Ascending aorta (tissue), 2 donors: ENCODE measurements at regions of chr20 and their contacts with region 1.

Region 1: DNA sequence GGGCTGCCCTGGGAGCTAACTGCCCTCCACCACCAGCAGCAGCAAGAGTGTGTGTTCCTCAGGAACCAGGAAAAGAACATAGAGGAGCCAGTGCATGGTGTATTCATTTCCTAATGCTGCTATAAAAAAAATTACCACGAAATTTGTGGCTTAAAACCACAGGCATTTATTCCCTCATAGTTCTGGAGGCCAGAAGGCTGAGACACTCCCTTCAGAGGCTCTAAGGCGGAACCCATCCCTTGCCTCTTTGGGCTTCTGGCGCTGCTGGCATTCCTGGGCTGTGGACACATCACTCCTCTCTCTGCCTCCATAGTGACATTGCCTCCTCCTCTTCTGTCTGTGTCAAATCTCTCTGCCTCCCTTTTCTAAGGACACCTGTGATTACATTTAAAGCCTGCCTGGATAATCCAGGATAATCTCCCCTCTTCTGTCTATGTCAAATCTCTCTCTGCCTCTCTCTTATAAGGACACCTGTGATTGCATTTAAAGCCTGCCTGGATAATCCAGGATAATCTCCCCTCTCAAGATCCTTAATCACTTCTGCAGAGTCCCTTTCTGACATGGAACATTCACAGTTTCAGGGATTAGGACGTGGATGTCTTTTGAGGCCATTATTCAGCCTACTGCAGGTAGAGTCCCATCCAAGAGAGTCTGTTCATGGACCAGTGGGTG is 54.7 kb downstream of the NDUFAF5 start:
- DNase-seq: no peak
- H3K4me3 ChIP-seq: no peak overlapping the region
- H3K27ac ChIP-seq: no peak overlapping the region
- H3K4me1 ChIP-seq: no peaks in the 10 kb centered on the region
- H3K27me3 ChIP-seq: no peaks in the 10 kb centered on the region
- CTCF ChIP-seq: no peak

Region 2: GRCh38 chr20:13029687-13030510 is 809.7 kb before region 1 on chr20:
- intact Hi-C with region 1: no loop called
- DNase-seq: peak in 1 of 2 donors; percentile 70
- H3K4me3 ChIP-seq: no peak overlapping the region
- H3K27ac ChIP-seq: no peak overlapping the region
- H3K4me1 ChIP-seq: no peaks in the 10 kb centered on the region
- H3K27me3 ChIP-seq: no peaks in the 10 kb centered on the region
- CTCF ChIP-seq: no peak

Region 3: GRCh38 chr20:13868331-13868730 is 28.8 kb after region 1 on chr20:
- intact Hi-C with region 1: no loop called
- DNase-seq: peak; percentile 38 to 77
- H3K4me3 ChIP-seq: no peak overlapping the region
- H3K27ac ChIP-seq: peak overlapping the region; percentile 76 to 79
- H3K4me1 ChIP-seq: peaks cover 9 to 16% of the 10 kb centered on the region in 2 donors
- H3K27me3 ChIP-seq: no peaks in the 10 kb centered on the region
- CTCF ChIP-seq: no peak

Region 4: DNA sequence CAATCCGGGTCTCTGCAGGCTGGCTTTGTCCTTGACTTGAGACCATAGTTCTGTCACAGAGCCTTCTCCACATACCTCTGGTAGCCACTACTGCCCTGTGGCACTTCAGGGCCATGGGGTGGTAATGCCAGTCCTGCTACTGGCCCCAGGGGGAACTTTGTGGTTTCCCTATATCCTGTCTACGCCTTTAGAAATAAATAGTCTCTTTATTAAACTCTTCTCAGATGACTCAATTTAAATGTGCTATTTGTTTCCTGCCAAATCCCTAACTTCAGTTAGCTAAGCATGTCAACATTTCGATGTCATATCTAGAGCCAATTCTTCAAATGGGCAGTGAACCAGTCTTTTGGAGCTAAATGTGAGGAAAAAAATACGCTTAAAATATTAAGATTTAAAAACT is 90.7 kb after region 1 on chr20:
- intact Hi-C with region 1: loop called (anchors 10 kb)
- DNase-seq: no peak
- H3K4me3 ChIP-seq: no peak overlapping the region
- H3K27ac ChIP-seq: no peak overlapping the region
- H3K4me1 ChIP-seq: no peaks in the 10 kb centered on the region
- H3K27me3 ChIP-seq: no peaks in the 10 kb centered on the region
- CTCF ChIP-seq: no peak

Region 5: GRCh38 chr20:13990465-13990864 is 150.9 kb after region 1 on chr20 and contains the start of gene SEL1L2:
- intact Hi-C with region 1: no loop called
- DNase-seq: no peak
- H3K4me3 ChIP-seq: no peak within 1 kb of the TSS
- H3K27ac ChIP-seq: no peak within 1 kb of the TSS
- H3K4me1 ChIP-seq: no peaks in the 10 kb centered on the region
- H3K27me3 ChIP-seq: no peaks in the 10 kb centered on the region
- CTCF ChIP-seq: no peak
- total RNA-seq, gene SEL1L2: not detected